ENCODE measurements at regions of chr1 and their contacts with region 1.

Region 1: GRCh38 chr1:158527190-158527815 is 26.9 kb downstream of the OR6Y1 start:
- DNase-seq: peak; percentile 53
- H3K4me3 Mint-ChIP-seq: no peak overlapping the region
- H3K27ac Mint-ChIP-seq: no peak overlapping the region
- H3K4me1 Mint-ChIP-seq: no peaks in the 10 kb centered on the region
- H3K27me3 Mint-ChIP-seq: peaks cover 100% of the 10 kb centered on the region
- CTCF ChIP-seq: peak; percentile 93

Region 2: GRCh38 chr1:158506369-158506987 is 20.8 kb before region 1 on chr1:
- CTCF ChIA-PET with region 1: interaction called, 25 read pairs
- POLR2A ChIA-PET with region 1: no interaction called
- intact Hi-C with region 1: no loop called
- DNase-seq: peak; percentile 61
- H3K4me3 Mint-ChIP-seq: no peak overlapping the region
- H3K27ac Mint-ChIP-seq: no peak overlapping the region
- H3K4me1 Mint-ChIP-seq: no peaks in the 10 kb centered on the region
- H3K27me3 Mint-ChIP-seq: peaks cover 83% of the 10 kb centered on the region
- CTCF ChIP-seq: peak; percentile 63

Region 3: DNA sequence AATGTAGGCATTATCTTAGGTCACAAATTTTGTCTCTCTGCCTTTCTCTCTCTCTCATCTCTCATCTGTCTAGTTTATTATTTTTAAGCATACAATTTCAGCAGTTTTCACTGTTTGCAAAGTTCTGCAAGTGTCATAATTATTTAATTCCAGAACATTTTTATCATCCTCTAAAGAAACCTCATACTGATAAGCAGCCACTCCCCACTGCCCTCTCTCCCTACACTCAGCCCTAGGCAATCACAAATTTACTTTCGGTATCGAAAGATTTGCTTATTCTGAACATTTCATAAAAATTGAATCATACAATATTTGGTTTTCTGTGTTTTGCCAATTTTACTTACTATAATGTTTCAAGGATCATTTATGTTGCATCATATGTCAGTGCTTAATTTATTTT is 10.3 kb after region 1 on chr1:
- CTCF ChIA-PET with region 1: interaction called, 13 read pairs
- POLR2A ChIA-PET with region 1: interaction called, 3 read pairs
- intact Hi-C with region 1: no loop called
- DNase-seq: no peak
- H3K4me3 Mint-ChIP-seq: no peak overlapping the region
- H3K27ac Mint-ChIP-seq: no peak overlapping the region
- H3K4me1 Mint-ChIP-seq: no peaks in the 10 kb centered on the region
- H3K27me3 Mint-ChIP-seq: peaks cover 84% of the 10 kb centered on the region
- CTCF ChIP-seq: no peak